ENCODE measurements at regions of chr5 and their contacts with region 1.

Region 1: DNA sequence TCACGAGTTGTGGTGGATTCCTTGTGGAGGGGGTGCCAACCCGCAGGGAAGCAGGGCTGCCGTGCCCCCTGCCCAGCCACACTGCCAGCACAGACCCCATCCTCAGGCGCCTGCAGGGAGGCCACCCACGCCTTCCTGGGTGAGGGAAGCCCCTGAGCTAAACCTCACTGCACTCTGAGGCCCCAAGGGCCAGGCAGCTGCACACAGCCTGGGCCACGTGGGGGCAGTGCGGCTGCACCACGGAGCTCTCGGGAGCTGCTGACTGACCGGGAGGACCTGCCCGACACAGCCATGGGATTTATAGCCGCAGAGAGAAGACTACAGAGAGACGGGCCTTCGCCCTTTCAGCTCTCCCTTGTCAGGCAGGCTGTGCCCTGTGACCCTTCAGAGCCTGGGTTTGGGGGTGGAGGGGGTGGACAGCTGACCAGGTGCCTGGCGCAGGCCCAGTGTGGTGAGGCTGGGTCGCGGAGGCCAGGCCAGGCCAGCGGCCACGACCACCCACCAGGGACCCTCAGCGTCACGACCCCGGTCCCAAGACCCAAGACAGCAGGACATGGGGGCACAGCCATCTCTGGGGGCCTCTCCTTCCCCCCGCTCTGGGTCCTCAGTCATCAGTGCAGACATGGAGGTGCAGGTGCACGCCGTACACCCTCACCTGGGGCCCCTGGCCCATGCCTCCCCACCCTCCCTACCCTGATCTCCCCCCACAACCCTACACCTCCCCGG is 4.3 kb upstream of the AHRR start:
- H3K4me3 ChIP-seq: no peak overlapping the region
- H3K27ac ChIP-seq: no peak overlapping the region
- H3K4me1 ChIP-seq: peaks cover 9% of the 10 kb centered on the region
- CTCF ChIP-seq: peak; percentile 94

Region 2: GRCh38 chr5:337563-338130 is 20.4 kb after region 1 on chr5:
- CTCF ChIA-PET with region 1: interaction called, 30 read pairs
- POLR2A ChIA-PET with region 1: interaction called, 3 read pairs
- H3K4me3 ChIP-seq: no peak overlapping the region
- H3K27ac ChIP-seq: no peak overlapping the region
- H3K4me1 ChIP-seq: no peaks in the 10 kb centered on the region
- CTCF ChIP-seq: peak; percentile 57; the same call in 1 of the 2 replicates

Region 3: DNA sequence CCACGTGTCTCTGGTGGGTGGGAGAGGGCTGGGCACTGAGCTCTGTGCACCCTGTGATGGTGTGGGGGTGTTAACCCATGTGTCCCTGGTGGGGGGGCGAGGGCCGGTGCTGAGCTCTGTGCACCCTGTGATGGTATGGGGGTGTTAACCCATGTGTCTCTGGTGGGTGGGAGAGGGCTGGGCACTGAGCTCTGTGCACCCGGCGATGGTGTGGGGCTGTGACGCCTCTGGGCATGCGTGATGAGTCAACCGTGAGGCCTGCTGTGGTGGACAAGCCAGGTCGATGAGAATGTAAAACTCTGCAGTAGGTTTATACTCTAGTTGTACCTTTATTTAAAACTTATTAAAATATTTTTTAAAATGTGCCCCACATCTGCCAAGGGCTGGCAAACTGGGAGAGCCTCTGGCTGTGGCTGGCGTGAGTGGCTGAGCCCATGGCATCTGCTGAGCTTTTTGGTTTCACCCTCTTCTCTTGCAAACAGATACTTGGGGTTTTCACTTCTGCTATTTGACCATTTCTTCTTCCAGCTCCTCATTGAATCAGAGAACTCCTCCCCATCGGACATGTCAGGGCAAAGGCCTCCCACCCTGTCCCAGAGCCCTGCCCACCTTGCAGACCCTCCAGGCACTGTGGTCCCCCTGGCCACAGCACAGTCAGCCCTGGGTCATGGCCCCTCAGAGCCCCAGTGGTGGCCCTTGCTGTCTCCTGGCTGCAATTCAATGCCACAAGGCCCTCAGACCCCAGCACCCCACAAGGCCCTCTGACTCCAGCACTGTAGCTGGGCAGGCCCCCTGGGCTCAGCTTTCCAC is 107.3 kb after region 1 on chr5:
- CTCF ChIA-PET with region 1: interaction called, 137 read pairs
- POLR2A ChIA-PET with region 1: no interaction called
- H3K4me3 ChIP-seq: no peak overlapping the region
- H3K27ac ChIP-seq: no peak overlapping the region
- H3K4me1 ChIP-seq: 0 out of 2 replicates have a peak, but pooled peaks cover 2% of the 10 kb centered on the region
- CTCF ChIP-seq: no peak

Region 4: DNA sequence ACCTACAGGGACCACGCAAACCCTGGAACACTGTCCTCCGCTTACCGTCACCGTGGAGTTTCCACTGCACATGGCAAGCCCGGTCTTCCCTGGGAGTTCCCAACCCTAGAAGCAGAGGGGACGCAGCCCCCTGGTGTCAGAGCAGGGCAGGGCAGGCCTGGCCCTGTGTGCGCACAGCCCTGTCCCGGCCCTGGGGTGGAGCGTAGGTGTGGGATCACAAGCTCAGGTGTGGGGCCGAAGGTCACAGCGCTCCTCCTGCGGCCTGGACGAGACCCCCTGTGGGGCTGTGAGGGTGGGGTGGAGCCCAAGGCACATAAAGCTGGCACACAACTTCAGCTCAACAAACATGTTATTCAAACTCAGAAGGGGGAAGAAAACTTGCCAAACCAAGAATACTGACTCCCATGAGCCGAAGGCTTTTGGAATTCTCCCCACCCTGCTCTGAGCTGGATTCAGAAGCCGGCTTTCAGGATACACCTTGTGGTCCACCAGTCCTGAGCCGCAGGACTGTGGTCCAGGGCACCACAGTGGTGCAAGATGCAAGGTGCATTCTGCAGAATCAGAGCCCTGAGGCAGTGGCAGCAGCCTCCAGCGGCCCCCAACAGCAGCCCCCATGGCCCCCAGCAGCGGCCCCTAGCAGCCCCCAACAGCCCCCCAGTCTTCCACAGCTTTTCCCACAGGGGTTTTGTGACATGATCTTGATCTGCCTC is 113.9 kb after region 1 on chr5:
- CTCF ChIA-PET with region 1: interaction called, 137 read pairs
- POLR2A ChIA-PET with region 1: interaction called, 3 read pairs
- H3K4me3 ChIP-seq: no peak overlapping the region
- H3K27ac ChIP-seq: no peak overlapping the region
- H3K4me1 ChIP-seq: no peaks in the 10 kb centered on the region
- CTCF ChIP-seq: peak; percentile 89

Region 5: DNA sequence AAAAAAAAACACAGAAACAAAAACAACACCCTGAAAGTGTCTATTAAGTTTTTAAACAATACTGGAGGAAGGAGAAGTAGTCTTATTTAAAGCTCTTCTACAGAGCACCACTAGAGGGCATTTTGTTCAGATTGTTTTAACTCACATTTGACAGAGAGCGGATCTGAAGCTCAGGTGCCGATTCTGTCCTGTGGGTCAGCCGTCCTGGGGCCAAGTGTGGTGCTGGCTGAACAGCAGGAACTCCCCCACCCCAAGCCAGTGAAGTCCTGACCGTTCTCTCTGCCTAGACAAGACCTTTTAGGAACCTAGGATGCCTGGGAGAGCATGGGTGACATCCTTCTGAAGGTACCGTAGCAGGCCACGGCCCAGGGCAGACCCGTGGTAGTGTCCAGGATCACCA is 129.6 kb after region 1 on chr5:
- CTCF ChIA-PET with region 1: interaction called, 21 read pairs
- POLR2A ChIA-PET with region 1: interaction called, 5 read pairs
- H3K4me3 ChIP-seq: no peak overlapping the region
- H3K27ac ChIP-seq: no peak overlapping the region
- H3K4me1 ChIP-seq: peaks cover 10% of the 10 kb centered on the region
- CTCF ChIP-seq: peak; percentile 44

Region 6: GRCh38 chr5:472656-473553 is 155.7 kb after region 1 on chr5:
- CTCF ChIA-PET with region 1: no interaction called
- POLR2A ChIA-PET with region 1: interaction called, 12 read pairs
- H3K4me3 ChIP-seq: peak overlapping the region; percentile 66
- H3K27ac ChIP-seq: peak overlapping the region; percentile 95
- H3K4me1 ChIP-seq: peaks cover 11% of the 10 kb centered on the region
- CTCF ChIP-seq: 0 out of 2 replicates have a peak, but pooled peaks have one; percentile 21

Measured in HEK293 (cell line).